GM10248 (cell line): ENCODE measurements at regions of chr1 and their contacts with region 1.

Region 1: DNA sequence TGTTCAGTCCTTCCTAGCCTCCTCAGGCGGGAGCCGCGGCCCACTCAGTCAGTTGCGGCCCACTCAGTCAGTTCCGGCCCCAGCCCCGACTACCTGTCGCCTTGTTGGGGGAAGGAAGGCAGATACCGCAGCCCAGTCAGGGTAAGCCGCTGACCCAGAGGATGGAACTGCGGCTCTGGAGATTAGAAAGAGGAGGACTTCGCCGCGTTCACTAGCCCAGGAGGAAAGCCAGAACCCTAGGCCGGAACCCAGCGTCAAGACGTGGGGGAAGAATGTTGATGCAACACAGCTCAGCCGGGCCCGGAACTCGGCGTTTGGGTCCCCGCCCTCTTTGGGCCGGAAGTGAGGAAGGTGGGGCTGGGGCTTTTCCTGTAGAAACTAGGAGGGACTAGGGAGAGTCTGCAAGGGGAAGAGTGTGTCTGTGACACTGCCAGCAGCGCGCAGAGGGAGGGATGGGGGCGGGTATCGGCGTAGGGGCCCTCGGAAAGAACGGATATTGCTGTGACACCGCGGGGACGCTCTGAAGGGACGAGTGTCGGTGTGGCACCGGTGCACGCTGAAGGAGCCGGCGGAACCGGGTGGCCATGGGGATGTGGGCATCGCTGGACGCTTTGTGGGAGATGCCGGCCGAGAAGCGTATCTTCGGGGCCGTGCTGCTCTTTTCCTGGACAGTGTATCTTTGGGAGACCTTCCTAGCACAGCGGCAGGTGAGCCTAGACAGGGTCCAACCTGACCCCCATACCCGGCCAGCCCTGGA is at the start of gene ZMPSTE24:
- DNase-seq: peak; percentile 91
- CTCF ChIP-seq: no peak

Region 2: DNA sequence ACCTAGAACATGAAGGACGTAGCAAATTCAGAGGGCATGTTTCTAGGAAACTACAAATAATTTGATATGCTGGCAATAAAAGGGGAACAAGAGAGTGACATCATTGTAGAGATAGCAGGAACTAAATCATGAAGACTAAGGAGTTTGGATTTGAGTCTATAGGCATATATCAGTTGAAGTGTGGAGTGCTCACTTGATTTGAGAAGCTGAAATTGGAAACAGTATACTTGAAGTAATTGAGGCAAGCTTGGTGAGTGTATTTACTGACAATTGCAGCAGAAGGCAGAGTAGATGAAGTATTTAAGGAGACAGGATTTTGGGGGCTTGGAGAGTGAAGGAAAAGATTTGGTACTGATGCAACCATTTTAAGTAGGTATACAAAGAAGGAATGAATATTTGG is 16.5 kb before region 1 on chr1:
- CTCF ChIA-PET with region 1: interaction called, 11 read pairs
- POLR2A ChIA-PET with region 1: no interaction called
- DNase-seq: no peak
- CTCF ChIP-seq: no peak

Region 3: DNA sequence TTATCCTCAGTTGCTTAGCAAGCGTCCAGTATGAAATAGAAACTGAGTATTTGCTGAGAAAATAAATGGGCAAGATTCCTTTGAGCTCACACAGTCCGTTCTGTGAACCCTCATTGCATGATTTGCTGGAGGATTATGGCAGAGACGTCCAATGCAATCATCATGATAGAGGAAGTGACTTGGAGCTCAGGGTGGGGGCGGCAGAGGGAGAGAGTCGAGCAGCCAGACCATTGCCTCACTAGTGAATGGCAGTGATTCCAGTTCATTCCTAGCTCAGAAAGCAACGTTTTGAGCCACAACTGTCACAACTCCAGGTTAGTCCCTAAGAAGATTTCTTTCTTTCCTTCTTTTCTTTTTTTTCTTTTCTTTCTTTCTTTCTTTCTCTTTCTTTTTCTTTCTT is 86.7 kb after region 1 on chr1:
- CTCF ChIA-PET with region 1: no interaction called
- POLR2A ChIA-PET with region 1: no interaction called
- DNase-seq: peak; percentile 41
- CTCF ChIP-seq: no peak

Region 4: DNA sequence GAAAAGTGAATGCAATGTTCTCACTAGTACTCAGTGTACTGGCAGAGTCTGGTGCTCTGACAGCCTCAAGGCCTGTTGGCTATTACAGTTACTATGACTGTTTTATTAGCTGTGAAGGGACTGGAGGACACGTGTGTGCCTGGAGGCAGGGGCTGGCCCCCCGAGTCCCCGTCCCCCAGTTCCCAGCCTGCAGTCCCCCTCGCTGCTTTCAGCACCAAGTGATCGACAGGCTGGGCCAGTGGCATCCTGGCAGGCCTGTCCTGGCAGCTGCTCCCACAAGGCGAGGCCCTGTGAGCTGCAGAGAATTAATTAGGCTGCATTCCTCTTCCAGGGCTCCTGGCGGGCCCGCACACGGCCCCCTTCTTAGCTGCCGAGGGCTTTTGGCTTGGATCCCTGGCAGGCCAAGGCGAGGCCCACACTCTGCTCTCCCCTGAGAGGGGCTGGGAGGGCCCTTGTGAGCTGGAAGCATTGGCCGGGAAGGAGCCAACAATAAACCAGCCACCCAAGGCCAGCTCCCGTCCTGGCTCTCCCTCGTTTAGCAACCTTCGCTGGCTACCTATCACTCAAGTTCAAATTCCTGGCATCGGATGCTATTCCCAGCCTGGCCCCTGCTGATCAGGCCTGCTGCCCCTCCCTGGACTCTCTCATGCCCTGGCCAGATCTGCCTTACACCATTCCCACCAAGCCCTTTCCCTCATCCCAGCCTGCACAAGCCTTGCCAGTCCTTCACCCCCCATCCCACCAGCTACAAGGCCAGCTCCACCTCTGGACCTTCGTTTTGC is 1216.8 kb after region 1 on chr1:
- CTCF ChIA-PET with region 1: no interaction called
- POLR2A ChIA-PET with region 1: interaction called, 12 read pairs
- DNase-seq: no peak
- CTCF ChIP-seq: no peak